Activated T-helper 1 cell treated with anti-CD3 and anti-CD28 coated beads, Interleukin-12 subunit alpha, Interleukin-12 subunit beta, Interleukin-2, Interleukin-4 antibody, amounts not matched to agents 30 ng/mL and 10 ng/mL and 1 ng/mL, durations not matched to agents 14 hours and 24 hours and 36 hours (primary cell): ENCODE measurements at regions of chrX and their contacts with region 1.

Region 1: DNA sequence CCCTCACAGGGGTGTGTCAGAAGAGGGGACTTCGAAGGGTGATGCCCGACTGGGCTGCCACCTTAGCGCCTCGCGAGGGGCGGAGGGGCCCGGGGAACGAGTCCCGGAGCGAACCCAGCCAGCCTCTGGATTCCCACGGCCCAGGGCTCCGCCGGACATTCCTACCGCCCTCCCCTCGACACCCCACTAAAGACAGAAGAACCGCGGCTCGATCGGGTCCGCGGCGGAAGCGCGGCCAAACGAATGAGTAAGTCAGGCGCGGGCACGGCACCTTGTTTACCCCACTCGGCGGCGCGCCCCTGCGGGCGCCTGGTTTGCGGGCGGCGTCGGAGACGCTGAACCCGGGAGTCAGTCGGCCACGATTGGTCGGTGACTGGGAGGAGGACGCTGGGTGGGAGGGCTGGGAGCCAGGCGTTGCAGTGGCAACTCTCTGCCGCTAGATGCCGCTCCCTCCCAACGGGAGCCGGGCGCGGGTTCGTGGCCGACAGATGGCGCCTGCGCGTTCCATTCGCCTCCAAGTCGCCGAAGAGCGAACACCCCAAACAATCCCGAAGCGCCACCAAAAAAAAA is 1.4 kb upstream of the STAG2 start:
- DNase-seq: peak; percentile 83
- H3K4me3 Mint-ChIP-seq: peak overlapping the region; percentile 95
- H3K27ac Mint-ChIP-seq: peak overlapping the region; percentile 98
- H3K4me1 Mint-ChIP-seq: peaks cover 29% of the 10 kb centered on the region
- H3K27me3 Mint-ChIP-seq: peaks cover 2% of the 10 kb centered on the region

Region 2: DNA sequence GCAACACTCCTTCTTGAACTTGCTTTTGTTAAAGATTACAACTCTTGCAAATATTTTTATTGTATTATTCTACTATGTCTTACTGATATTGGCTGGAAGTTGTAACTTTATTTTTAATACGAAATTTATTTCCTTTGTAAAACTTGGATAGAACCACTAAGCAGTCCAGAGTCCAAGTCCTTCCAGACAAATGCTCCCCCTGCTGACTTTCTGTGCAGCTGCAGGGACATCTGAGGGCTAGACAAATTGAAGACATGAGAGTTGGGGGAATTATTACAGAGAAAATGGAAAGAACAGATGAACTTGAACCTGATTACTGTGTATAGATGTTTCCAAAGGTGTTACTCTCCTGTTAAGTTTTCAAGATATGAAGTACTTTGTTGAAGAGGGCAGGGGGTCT is 537.2 kb before region 1 on chrX:
- intact Hi-C with region 1: no loop called
- DNase-seq: no peak
- H3K4me3 Mint-ChIP-seq: no peak overlapping the region
- H3K27ac Mint-ChIP-seq: no peak overlapping the region
- H3K4me1 Mint-ChIP-seq: no peaks in the 10 kb centered on the region
- H3K27me3 Mint-ChIP-seq: no peaks in the 10 kb centered on the region

Region 3: DNA sequence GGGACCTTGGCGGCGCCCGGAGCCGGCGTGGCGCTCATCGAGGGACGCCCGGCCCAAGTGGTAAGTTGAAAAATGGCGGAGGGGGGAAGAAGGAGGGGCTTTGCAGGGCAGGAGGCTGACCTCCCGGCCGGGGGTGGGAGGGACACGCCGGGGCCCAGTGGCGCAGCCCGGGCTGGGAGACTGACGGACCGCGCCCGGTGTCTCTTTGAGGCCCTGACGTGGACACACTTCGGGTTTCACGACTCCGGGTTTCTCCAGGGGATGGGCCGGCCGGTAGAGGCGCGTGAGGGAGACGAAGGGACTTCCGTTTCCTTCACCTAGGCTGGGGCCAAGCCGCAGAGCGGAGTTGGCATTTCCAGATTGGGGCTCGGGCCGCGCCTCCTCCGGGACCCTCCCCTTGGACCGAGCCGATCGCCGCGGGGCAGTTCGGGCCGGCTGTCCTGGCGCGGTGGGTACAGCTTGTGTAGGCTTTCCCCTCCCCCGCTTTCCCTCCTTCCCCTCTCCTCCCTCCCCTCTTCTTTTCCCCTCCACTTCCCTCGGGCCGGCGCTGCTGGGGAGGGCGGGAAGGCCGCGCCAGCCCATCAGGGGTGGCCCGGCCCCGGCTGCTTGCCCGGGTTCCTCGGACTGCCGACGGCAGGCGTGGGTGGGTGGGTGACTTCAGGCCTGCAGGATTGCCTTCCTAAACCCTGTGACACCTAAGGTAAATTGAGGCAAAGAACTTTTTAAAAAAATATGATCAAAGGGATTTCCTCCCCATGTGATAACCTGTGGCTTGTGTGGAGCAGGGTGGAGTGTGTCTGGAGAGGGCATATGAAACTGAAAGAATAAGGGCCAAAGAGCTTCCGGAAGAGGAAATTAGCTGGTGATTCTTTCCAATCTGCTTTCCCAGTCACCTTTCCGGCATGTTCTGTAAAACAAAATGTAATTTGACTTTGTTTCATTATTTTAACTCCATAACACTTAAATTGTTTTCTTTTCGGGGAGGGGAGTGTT is 100.0 kb before region 1 on chrX and contains the start of gene XIAP:
- intact Hi-C with region 1: loop called (anchors 1 kb)
- DNase-seq: peak; percentile 66
- H3K4me3 Mint-ChIP-seq: peak within 1 kb of the TSS; percentile 89
- H3K27ac Mint-ChIP-seq: peak within 1 kb of the TSS; percentile 90
- H3K4me1 Mint-ChIP-seq: peaks cover 17% of the 10 kb centered on the region
- H3K27me3 Mint-ChIP-seq: no peaks in the 10 kb centered on the region
- total RNA-seq, gene XIAP: 35.0 and 39.1 TPM in 2 replicates

Region 4: DNA sequence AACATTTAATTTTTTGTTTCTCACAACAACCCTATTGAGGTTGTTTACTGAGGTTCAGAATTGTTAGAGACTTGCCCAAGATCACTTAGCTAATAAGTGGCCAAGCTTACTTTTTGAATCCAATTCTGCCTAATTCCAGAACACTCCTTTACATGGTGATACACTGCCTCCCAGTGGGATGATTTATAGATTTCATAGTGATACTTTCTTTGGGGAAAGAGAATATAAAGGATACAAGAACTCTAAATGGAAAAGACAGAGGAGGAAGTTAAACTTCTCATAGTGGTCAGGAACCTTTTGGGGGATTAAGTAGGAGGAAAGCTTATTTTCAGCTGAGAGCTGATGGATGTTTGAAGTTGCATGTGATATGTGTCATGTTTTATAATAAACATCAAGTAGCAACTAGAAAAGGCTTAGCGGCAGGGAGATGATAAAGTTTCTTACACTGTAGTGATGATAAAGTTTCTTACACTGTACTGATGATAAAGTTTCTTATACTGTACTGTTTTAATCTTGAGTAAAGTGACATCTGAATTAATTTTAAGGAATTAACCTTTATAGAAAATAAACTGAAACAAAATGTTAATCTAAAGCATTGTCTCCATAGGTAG is 16.7 kb after region 1 on chrX:
- intact Hi-C with region 1: loop called (anchors 1 kb)
- DNase-seq: no peak
- H3K4me3 Mint-ChIP-seq: no peak overlapping the region
- H3K27ac Mint-ChIP-seq: no peak overlapping the region
- H3K4me1 Mint-ChIP-seq: peaks cover 20% of the 10 kb centered on the region
- H3K27me3 Mint-ChIP-seq: no peaks in the 10 kb centered on the region

Region 5: DNA sequence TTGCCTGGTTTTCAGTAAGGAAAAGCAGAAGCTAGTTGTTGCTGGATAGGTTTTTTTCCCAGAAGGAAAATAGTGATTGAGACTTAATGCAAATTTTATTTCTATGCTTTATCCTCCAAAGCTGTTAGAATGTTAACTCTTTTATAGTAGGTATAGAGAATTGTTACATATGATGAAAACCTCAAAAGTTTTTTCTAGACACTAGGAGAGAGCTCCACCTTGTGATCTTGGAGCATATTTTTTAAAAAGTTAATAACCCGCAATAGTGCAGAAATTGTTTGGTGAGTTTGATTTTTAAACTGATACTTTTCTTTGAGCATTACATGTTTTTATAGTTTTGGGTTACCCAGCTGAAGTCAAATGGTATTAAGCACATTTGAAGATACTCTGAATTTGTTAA is 57.9 kb after region 1 on chrX:
- intact Hi-C with region 1: loop called (anchors 2 kb)
- DNase-seq: no peak
- H3K4me3 Mint-ChIP-seq: no peak overlapping the region
- H3K27ac Mint-ChIP-seq: no peak overlapping the region
- H3K4me1 Mint-ChIP-seq: peaks cover 9% of the 10 kb centered on the region
- H3K27me3 Mint-ChIP-seq: no peaks in the 10 kb centered on the region

Region 6: GRCh38 chrX:124217304-124218251 is 257.5 kb after region 1 on chrX:
- intact Hi-C with region 1: loop called (anchors 2 kb)
- DNase-seq: peak; percentile 56
- H3K4me3 Mint-ChIP-seq: peak overlapping the region; percentile 79
- H3K27ac Mint-ChIP-seq: peak overlapping the region; percentile 93
- H3K4me1 Mint-ChIP-seq: peaks cover 76% of the 10 kb centered on the region
- H3K27me3 Mint-ChIP-seq: peaks cover 2% of the 10 kb centered on the region

Region 7: DNA sequence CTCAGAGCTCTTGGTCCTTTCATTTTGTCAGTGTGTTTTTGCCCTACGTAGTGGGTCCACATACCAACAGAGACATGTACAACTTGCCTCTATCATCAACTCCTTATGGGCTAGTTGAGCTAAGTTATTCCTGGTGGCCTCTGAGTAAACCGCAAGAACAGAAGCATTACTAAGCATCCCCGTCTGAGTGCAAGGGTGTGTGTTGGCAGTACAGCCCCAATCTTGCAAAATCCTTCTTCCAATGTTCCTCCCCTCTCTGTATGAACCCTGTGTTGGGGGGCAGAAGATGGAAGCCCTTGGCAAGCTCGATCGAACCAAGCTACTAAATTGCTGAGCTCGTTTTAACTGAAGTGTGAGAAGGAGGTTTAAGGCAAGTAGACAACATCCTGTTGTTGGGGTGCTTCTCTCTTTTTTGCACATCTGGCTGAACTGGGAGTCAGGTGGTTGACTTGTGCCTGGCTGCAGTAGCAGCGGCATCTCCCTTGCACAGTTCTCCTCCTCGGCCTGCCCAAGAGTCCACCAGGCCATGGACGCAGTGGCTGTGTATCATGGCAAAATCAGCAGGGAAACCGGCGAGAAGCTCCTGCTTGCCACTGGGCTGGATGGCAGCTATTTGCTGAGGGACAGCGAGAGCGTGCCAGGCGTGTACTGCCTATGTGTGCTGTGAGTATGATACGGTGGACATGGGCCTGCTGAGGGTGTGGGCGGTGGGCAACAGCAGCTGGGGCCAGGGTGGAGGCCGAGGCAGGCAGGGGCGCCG is 386.2 kb after region 1 on chrX and contains the start of gene SH2D1A:
- intact Hi-C with region 1: loop called (anchors 1 kb)
- DNase-seq: no peak
- H3K4me3 Mint-ChIP-seq: peak within 1 kb of the TSS; percentile 92
- H3K27ac Mint-ChIP-seq: peak within 1 kb of the TSS; percentile 97
- H3K4me1 Mint-ChIP-seq: peaks cover 49% of the 10 kb centered on the region
- H3K27me3 Mint-ChIP-seq: no peaks in the 10 kb centered on the region
- total RNA-seq, gene SH2D1A: 50.4 and 56.3 TPM in 2 replicates

Region 8: GRCh38 chrX:124362072-124362471 is 401.9 kb after region 1 on chrX:
- intact Hi-C with region 1: no loop called
- DNase-seq: no peak
- H3K4me3 Mint-ChIP-seq: no peak overlapping the region
- H3K27ac Mint-ChIP-seq: peak overlapping the region; percentile 53
- H3K4me1 Mint-ChIP-seq: peaks cover 47% of the 10 kb centered on the region
- H3K27me3 Mint-ChIP-seq: no peaks in the 10 kb centered on the region